Breast epithelium (tissue), 4 donors: ENCODE measurements at regions of chr9 and their contacts with region 1.

Region 1: DNA sequence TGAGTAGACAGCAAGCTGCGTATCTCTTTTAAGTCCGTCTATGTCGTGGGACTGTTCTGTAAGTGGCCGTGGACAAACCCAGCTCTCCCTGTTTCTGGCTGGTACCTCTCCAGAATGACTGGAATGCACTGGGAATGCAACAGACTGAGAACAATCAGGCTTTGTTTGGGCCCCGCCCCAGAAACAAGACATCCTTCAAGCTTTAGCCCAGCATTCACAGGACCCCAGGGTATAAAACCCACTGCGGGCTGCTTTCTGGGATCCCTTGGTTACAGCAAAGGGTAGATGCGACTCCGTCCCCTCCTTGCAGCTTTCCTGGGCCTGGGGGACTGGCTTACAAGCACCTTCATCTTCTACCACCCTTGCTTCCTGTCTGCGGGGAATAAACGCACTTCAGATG is 45.6 kb upstream of the SPTLC1 start:
- DNase-seq: no peak
- H3K4me3 ChIP-seq: no peak overlapping the region
- H3K27ac ChIP-seq: no peak overlapping the region
- H3K4me1 ChIP-seq: no peaks in the 10 kb centered on the region
- H3K27me3 ChIP-seq: no peaks in the 10 kb centered on the region
- CTCF ChIP-seq: no peak
- POLR2A ChIP-seq: no peak

Region 2: DNA sequence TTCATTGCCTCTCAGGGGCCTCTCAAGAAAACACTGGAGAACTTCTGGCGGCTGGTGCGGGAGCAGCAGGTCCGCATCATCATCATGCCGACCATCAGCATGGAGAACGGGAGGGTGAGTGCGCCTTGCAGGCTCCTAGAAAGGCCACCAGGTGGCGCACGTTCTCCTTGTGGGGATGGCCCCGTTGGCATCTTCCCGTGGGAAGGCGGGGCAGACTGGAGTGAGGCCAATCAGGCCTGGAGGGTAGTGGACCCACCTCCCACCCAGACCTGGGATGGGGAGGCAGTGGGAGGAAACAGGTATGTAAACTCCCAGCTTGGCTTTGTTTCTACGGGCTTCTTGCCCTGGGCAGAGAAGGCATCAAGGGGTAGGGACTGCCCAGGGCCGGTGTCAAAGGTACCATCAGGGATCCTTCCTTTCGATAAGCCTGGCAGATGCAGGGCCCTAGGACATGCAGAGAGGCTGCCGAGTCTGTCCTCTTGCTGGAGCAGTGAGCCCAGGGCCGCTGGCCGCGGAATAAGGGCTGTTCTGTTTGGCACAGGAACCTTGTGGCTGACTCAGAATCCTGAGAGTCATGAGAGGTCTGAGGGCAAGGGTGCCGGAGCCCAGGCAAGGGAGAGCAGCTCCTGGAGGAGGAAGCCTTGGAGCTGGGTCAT is 26.7 kb before region 1 on chr9:
- intact Hi-C with region 1: no loop called
- DNase-seq: peak; percentile 63 to 74
- H3K4me3 ChIP-seq: peak overlapping the region in 2 of 3 donors; percentile 32 to 58
- H3K27ac ChIP-seq: peak overlapping the region; percentile 4 to 52
- H3K4me1 ChIP-seq: no peaks in the 10 kb centered on the region
- H3K27me3 ChIP-seq: no peaks in the 10 kb centered on the region
- CTCF ChIP-seq: peak; percentile 77 to 81 (median 78)
- POLR2A ChIP-seq: no peak

Region 3: GRCh38 chr9:92749934-92750315 is 589.1 kb after region 1 on chr9:
- intact Hi-C with region 1: loop called (anchors 5 kb)
- DNase-seq: no peak
- H3K4me3 ChIP-seq: no peak overlapping the region
- H3K27ac ChIP-seq: peak overlapping the region in 1 of 2 donors; percentile 32
- H3K4me1 ChIP-seq: no peaks in the 10 kb centered on the region
- H3K27me3 ChIP-seq: no peaks in the 10 kb centered on the region
- CTCF ChIP-seq: no peak
- POLR2A ChIP-seq: no peak